Activated T-helper 2 cell treated with anti-CD3 and anti-CD28 coated beads, Interferon-gamma antibody, Interleukin-2, Interleukin-4, amounts not matched to agents 10 μg/mL and 5 μg/mL and 100 μg/mL, durations not matched to agents 14 hours and 24 hours and 36 hours (primary cell): ENCODE measurements at regions of chr16 and their contacts with region 1.

Region 1: DNA sequence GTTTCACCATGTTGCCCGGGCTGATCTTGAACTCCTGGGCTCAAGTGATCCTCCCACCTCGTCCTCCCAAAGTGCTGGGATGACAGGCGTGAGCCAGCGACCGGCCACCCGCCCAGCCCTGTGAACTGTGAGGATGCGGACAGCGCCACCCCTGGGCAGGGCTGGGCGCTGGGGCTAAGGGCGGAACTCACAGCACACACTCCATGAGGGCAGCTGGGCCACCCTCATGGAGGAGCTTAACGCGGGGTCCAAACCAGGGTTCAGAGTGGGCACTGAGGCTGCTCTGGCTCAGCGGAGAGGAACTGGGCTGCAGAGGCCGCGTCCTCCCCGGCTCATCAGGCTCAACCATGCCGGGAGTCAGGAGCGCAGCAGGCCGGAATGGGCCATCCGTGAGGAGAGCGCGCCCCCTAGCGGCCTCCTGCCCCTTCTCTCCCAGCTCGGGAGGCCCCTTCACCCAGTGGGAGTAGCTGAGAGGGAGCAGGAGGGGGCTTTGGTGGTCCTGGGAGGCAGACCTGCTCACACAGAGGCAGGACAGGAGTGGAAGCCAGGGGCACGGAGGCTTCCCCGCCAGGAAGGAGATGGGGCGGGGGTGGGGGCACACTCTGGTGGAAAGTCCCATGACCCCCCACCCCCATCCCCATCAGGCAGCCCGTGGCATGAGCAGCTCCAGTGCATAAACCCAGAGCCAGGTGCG is 13.8 kb downstream of the CORO7 start:
- DNase-seq: peak; percentile 51
- H3K4me3 Mint-ChIP-seq: no peak overlapping the region
- H3K27ac Mint-ChIP-seq: no peak overlapping the region
- H3K4me1 Mint-ChIP-seq: no peaks in the 10 kb centered on the region
- H3K27me3 Mint-ChIP-seq: no peaks in the 10 kb centered on the region

Region 2: DNA sequence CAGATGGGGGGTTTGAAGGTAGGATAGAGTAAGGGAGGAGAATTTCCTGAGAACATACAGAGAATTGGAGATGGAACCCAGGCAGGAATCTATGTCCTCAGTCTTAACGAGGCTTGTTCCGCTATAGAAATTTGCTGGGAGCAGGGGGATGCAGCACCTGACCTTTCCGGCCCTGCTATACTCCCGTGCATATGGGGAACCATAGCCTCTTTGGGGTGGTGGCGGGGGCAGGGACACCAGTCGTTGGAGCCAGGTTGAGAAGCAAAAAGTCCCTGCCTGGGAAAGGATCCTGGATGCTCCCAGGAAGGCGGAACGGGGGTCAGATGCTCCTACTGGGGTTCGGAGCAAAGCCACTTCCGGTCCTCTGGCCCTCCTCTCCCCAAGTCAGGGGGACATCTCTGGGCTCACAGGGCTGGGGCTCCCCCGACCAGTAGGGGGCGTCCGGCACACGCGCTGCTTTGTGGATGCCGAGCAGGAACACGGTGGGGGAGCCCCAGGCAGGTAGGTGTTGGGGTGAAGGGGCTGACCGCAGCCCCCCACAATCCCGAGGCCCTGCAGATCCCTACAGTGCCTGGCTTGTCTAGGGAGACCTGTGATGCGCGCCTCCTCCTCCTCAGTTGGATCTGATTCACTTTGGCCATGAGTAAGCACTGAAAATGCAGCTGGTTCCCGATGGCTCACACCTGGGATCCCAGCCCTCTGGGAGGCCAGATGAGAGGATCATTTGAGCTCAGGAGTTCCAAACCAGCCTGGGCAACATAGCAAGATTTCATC is 114.3 kb before region 1 on chr16:
- intact Hi-C with region 1: loop called (anchors 5 kb)
- DNase-seq: peak; percentile 69
- H3K4me3 Mint-ChIP-seq: no peak overlapping the region
- H3K27ac Mint-ChIP-seq: no peak overlapping the region
- H3K4me1 Mint-ChIP-seq: peaks cover 4% of the 10 kb centered on the region
- H3K27me3 Mint-ChIP-seq: no peaks in the 10 kb centered on the region

Region 3: GRCh38 chr16:4358831-4359561 is 43.6 kb before region 1 on chr16:
- intact Hi-C with region 1: loop called (anchors 5 kb)
- DNase-seq: peak; percentile 42
- H3K4me3 Mint-ChIP-seq: no peak overlapping the region
- H3K27ac Mint-ChIP-seq: no peak overlapping the region
- H3K4me1 Mint-ChIP-seq: no peaks in the 10 kb centered on the region
- H3K27me3 Mint-ChIP-seq: no peaks in the 10 kb centered on the region

Region 4: DNA sequence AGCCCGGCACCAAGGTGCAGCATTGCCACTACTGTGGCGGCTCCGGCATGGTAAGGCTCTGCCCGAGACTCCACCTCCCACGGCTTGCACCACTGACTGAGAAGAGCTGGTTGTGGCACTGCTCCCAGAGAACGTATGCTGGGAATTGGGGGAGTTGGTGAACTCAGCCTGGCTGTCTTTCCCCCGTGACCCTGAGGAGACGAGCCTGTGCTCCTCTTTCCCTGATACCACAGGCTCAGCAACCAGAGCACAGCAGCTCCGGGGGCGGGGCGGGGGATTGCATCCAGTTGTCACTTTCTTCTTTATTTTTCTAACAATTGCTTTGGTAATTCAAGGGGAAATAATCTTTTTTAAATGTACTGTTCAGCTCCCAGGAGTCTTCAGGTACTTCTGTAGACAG is 39.8 kb after region 1 on chr16:
- intact Hi-C with region 1: no loop called
- DNase-seq: no peak
- H3K4me3 Mint-ChIP-seq: no peak overlapping the region
- H3K27ac Mint-ChIP-seq: no peak overlapping the region
- H3K4me1 Mint-ChIP-seq: no peaks in the 10 kb centered on the region
- H3K27me3 Mint-ChIP-seq: no peaks in the 10 kb centered on the region